Activated naive CD4-positive, alpha-beta T cell treated with anti-CD3 and anti-CD28 coated beads for 36 hours (primary cell): ENCODE measurements at regions of chr15 and their contacts with region 1.

Region 1: DNA sequence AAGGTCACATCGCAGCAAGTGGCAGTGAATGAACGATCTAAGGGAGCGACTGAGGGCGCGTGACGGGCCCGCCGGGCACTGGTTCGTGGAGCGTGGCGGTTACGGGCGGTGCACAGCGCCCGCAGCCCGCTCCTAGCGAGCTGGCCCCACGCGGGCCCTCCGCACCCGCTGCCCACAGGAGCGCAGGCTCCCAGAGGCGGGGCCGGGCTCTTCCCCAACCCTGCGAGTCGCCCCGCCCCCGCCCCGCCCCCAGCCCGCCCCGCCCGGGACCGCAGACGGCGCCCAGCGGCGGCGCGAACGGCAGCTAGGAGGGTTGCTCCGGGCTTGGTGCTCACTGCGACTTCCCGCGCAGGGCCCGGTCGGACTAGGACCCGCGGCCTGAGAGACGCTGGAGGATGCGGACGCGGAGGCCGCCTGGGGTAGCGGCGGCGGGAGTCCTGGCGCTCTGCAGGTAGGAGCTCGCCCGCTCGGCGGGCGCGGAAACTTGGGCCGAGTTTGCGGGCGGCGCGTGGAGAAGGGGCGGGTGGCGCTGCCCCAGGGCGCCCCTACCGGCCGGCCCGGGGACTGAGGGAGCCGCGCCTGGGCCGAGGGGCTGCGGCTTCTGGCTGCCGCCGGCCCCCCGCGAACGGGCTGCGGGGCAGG is at the start of gene C15orf39:
- DNase-seq: peak; percentile 68
- H3K4me3 Mint-ChIP-seq: peak within 1 kb of the TSS; percentile 87
- H3K27ac Mint-ChIP-seq: peak within 1 kb of the TSS; percentile 83
- H3K4me1 Mint-ChIP-seq: peaks cover 41% of the 10 kb centered on the region
- H3K27me3 Mint-ChIP-seq: no peaks in the 10 kb centered on the region
- total RNA-seq, gene C15orf39: 7.4 to 8.7 TPM

Region 2: DNA sequence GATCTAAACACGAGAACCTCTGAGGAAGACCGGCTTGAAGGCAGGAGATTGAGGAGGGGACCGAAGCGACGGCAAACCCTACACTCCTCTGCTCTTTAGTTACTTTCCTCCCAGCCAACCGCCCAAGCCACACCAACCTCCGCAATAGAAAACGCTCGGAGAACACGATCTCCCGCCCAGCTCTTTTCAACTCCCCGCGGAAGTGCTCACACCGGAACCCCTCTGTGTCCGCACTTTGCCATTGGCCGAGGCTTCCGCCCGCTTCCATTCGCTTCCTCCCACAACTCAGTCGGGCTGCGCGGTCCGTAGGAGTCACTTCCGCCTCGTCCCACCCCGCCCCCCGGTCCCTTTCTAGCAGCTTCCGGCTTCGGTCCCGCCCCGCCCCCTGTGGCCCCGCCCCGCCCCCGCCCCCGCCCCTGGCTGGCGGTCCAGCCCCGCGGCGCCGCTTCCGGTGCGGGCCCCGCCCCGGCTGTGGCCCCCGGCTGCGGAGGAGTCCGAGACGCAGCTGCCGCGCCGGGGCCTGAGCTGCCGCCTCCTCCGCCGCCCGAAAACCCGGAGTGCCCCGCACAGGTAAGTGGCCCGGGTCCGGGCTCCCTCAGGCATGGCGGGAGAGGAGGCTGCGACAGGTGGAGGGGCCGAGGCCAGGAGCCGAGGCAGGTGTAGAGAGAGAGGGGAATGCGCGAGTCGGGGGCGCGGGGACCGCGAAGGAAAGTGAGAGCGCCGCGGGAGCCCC is 660.8 kb before region 1 on chr15 and contains the start of gene ARID3B:
- CTCF ChIA-PET with region 1: no interaction called
- intact Hi-C with region 1: loop called (anchors 5 kb)
- DNase-seq: peak; percentile 99
- H3K4me3 Mint-ChIP-seq: peak within 1 kb of the TSS; percentile 97
- H3K27ac Mint-ChIP-seq: peak within 1 kb of the TSS; percentile 90
- H3K4me1 Mint-ChIP-seq: peaks cover 46% of the 10 kb centered on the region
- H3K27me3 Mint-ChIP-seq: no peaks in the 10 kb centered on the region
- total RNA-seq, gene ARID3B: 14.2 to 15.9 TPM

Region 3: GRCh38 chr15:74873036-74873755 is 328.5 kb before region 1 on chr15 and contains the start of gene SCAMP2:
- CTCF ChIA-PET with region 1: no interaction called
- intact Hi-C with region 1: loop called (anchors 10 kb)
- DNase-seq: peak; percentile 92
- H3K4me3 Mint-ChIP-seq: peak within 1 kb of the TSS; percentile 98
- H3K27ac Mint-ChIP-seq: peak within 1 kb of the TSS; percentile 92
- H3K4me1 Mint-ChIP-seq: peaks cover 42% of the 10 kb centered on the region
- H3K27me3 Mint-ChIP-seq: no peaks in the 10 kb centered on the region
- total RNA-seq, gene SCAMP2: 60.6 TPM

Region 4: GRCh38 chr15:74888676-74889075 is 313.1 kb before region 1 on chr15:
- CTCF ChIA-PET with region 1: no interaction called
- intact Hi-C with region 1: no loop called
- DNase-seq: no peak
- H3K4me3 Mint-ChIP-seq: peak overlapping the region; percentile 94
- H3K27ac Mint-ChIP-seq: no peak overlapping the region
- H3K4me1 Mint-ChIP-seq: peaks cover 41% of the 10 kb centered on the region
- H3K27me3 Mint-ChIP-seq: no peaks in the 10 kb centered on the region

Region 5: GRCh38 chr15:74956648-74957300 is 245.0 kb before region 1 on chr15 and contains the start of gene RPP25:
- CTCF ChIA-PET with region 1: interaction called, 5 read pairs
- intact Hi-C with region 1: loop called (anchors 1 kb)
- DNase-seq: peak; percentile 65
- H3K4me3 Mint-ChIP-seq: peak within 1 kb of the TSS; percentile 69
- H3K27ac Mint-ChIP-seq: no peak within 1 kb of the TSS
- H3K4me1 Mint-ChIP-seq: peaks cover 44% of the 10 kb centered on the region
- H3K27me3 Mint-ChIP-seq: peaks cover 28% of the 10 kb centered on the region
- total RNA-seq, gene RPP25: 3.5 to 3.7 TPM

Region 6: GRCh38 chr15:75042730-75043508 is 158.8 kb before region 1 on chr15:
- CTCF ChIA-PET with region 1: interaction called, 20 read pairs
- intact Hi-C with region 1: loop called (anchors 1 kb)
- DNase-seq: peak; percentile 60
- H3K4me3 Mint-ChIP-seq: no peak overlapping the region
- H3K27ac Mint-ChIP-seq: no peak overlapping the region
- H3K4me1 Mint-ChIP-seq: peaks cover 7% of the 10 kb centered on the region
- H3K27me3 Mint-ChIP-seq: no peaks in the 10 kb centered on the region

Region 7: GRCh38 chr15:75321708-75322107 is 120.0 kb after region 1 on chr15:
- CTCF ChIA-PET with region 1: no interaction called
- intact Hi-C with region 1: no loop called
- DNase-seq: no peak
- H3K4me3 Mint-ChIP-seq: no peak overlapping the region
- H3K27ac Mint-ChIP-seq: no peak overlapping the region
- H3K4me1 Mint-ChIP-seq: no peaks in the 10 kb centered on the region
- H3K27me3 Mint-ChIP-seq: no peaks in the 10 kb centered on the region

Region 8: GRCh38 chr15:75468913-75469598 is 267.3 kb after region 1 on chr15:
- CTCF ChIA-PET with region 1: no interaction called
- intact Hi-C with region 1: no loop called
- DNase-seq: no peak
- H3K4me3 Mint-ChIP-seq: no peak overlapping the region
- H3K27ac Mint-ChIP-seq: peak overlapping the region; percentile 38
- H3K4me1 Mint-ChIP-seq: no peaks in the 10 kb centered on the region
- H3K27me3 Mint-ChIP-seq: no peaks in the 10 kb centered on the region

Region 9: GRCh38 chr15:75639709-75640482 is 438.2 kb after region 1 on chr15 and contains the start of gene IMP3:
- CTCF ChIA-PET with region 1: no interaction called
- intact Hi-C with region 1: loop called (anchors 5 kb)
- DNase-seq: peak; percentile 97
- H3K4me3 Mint-ChIP-seq: peak within 1 kb of the TSS; percentile 95
- H3K27ac Mint-ChIP-seq: peak within 1 kb of the TSS; percentile 91
- H3K4me1 Mint-ChIP-seq: peaks cover 30% of the 10 kb centered on the region
- H3K27me3 Mint-ChIP-seq: no peaks in the 10 kb centered on the region
- total RNA-seq, gene IMP3: 46.1 to 46.8 TPM

Region 10: GRCh38 chr15:76115888-76116885 is 914.5 kb after region 1 on chr15:
- CTCF ChIA-PET with region 1: no interaction called
- intact Hi-C with region 1: no loop called
- DNase-seq: no peak
- H3K4me3 Mint-ChIP-seq: no peak overlapping the region
- H3K27ac Mint-ChIP-seq: no peak overlapping the region
- H3K4me1 Mint-ChIP-seq: no peaks in the 10 kb centered on the region
- H3K27me3 Mint-ChIP-seq: peaks cover 5% of the 10 kb centered on the region